Posterior vena cava (tissue), 2 donors: ENCODE measurements at regions of chr20 and their contacts with region 1.

Region 1: DNA sequence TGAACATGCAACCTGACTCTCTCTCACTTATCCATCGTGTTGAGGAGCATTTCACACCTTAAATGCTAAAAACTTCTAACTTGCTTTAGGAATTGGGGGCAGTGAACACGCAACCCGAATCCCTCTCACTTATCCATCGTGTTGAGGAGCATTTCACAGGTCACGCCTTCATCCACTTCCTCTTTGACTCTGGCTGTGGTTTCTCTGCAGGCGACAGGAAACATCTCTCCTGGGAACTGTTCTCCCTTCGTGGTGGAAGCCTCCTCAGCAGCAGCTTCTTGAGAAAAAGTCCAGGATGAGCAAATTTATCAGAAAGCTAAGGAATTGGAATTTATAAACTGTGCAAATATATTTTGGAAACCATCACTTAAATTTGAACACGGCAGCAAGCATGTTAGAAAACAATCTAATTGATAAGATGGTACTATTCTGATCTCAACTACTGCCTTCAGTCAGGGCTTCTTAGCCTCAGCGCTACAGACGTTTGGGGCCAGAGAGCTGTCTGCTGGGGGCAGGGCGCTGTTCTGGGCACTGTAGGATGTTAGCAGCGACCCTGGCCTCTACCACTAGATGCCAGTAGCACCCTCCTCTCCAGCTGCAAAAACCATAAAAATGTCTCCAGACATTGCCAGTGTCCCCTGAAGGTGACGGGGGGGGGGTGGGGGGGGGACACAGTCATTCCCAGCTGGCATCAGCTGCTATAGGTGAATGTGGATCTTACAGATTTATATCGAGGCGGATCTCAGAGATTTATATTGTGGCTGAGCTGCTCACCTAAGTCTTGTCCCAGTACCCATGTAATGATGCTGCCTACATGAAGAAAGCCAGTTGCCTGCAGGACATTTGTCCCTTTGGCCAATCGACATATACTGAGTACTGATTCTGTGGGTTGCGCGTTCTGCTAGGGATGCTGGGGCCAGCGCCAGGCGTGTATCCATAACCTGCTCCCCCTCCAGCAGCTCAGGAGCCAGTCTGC is 26.2 kb downstream of the CTCFL start:
- DNase-seq: no peak

Region 2: GRCh38 chr20:57383447-57384347 is 115.0 kb before region 1 on chr20:
- intact Hi-C with region 1: loop called (anchors 5 kb)
- DNase-seq: no peak